Common myeloid progenitor, CD34-positive (primary cell): ENCODE measurements at regions of chr6 and their contacts with region 1.

Region 1: GRCh38 chr6:157946865-157947532 is 34.7 kb upstream of the SYNJ2 start:
- DNase-seq: peak; percentile 52 to 78 (median 77)
- H3K4me3 ChIP-seq: no peak overlapping the region
- H3K27ac ChIP-seq: no peak overlapping the region
- H3K4me1 ChIP-seq: peaks cover 0 to 7% (median 0%) of the 10 kb centered on the region in 4 experiments
- H3K27me3 ChIP-seq: no peaks in the 10 kb centered on the region

Region 2: DNA sequence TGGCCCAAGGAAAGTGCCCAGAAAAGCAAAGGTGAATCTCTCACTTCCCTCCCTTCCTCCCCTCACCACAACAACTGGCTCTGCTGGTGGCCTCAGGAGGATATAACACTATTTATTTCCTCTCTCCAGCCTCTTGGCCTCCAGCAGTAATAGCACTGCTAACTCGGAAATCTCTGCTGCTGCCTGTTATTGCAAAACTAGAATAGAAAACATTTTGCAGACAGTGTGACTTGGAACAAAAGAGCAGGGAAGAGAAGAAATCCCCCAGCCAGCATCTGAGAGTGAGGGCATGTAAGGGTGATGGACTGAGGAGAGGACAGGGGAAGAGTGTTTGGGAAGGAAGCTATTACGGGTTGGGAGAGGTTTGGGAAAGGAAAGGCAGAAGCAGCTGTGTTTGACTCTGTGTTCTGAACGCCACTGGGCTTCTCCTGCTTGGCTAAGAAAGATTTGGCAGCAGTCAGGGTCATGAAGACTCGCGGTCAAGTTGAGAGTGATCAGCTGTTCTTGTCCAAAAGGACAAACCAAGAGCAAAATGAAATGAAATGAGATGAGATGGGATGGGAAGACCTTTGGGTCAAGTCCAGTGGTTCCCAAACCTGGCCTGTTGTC is 204.9 kb before region 1 on chr6:
- CTCF ChIA-PET with region 1: no interaction called
- POLR2A ChIA-PET with region 1: no interaction called
- DNase-seq: no peak
- H3K4me3 ChIP-seq: no peak overlapping the region
- H3K27ac ChIP-seq: no peak overlapping the region
- H3K4me1 ChIP-seq: no peaks in the 10 kb centered on the region
- H3K27me3 ChIP-seq: no peaks in the 10 kb centered on the region

Region 3: DNA sequence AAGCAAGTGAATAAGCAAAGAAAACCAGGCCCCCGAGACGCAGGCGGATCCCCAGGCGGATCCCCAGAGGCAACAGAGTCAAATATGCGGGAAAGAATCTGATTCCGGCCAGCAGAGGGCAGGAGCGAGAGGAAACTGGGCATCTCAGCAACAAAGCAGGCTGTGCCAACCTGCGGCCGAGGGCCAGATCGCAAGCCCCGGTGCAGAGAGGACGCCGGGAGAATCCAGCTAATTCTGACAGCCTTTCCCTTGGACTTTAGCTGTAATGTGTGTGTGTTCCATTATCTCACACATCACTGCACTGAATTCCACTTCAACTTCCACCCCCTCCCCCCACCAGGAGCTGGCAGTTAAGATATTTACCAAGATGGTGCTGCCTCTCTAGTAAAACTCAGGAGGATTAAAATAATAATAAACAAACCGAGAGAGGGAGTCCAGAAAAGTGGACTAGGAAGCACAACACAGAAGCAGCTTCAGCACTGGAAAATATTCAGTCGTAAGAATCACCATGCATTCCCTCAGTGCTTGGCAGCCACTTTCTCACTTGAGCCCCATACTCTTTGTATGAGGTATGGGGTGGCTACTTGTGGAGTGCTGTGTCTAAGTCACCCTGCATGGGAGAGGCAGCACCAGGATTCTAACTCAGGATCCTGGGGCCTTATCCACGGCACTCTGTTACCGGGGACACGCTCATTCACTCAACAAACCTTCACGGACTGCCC is 190.1 kb before region 1 on chr6:
- CTCF ChIA-PET with region 1: interaction called, 32 read pairs
- POLR2A ChIA-PET with region 1: no interaction called
- DNase-seq: peak; percentile 78 to 87 (median 81)
- H3K4me3 ChIP-seq: no peak overlapping the region
- H3K27ac ChIP-seq: no peak overlapping the region
- H3K4me1 ChIP-seq: peaks cover 2 to 11% (median 10%) of the 10 kb centered on the region in 4 experiments
- H3K27me3 ChIP-seq: peaks cover 0 to 2% (median 0%) of the 10 kb centered on the region in 5 experiments

Region 4: GRCh38 chr6:157764178-157765033 is 182.6 kb before region 1 on chr6:
- CTCF ChIA-PET with region 1: interaction called, 32 read pairs
- POLR2A ChIA-PET with region 1: no interaction called
- DNase-seq: peak; percentile 92 to 97 (median 96)
- H3K4me3 ChIP-seq: peak overlapping the region in 4 of 7 experiments; percentile 20 to 49 (median 30)
- H3K27ac ChIP-seq: no peak overlapping the region
- H3K4me1 ChIP-seq: peaks cover 21 to 58% (median 53%) of the 10 kb centered on the region in 4 experiments
- H3K27me3 ChIP-seq: no peaks in the 10 kb centered on the region

Region 5: DNA sequence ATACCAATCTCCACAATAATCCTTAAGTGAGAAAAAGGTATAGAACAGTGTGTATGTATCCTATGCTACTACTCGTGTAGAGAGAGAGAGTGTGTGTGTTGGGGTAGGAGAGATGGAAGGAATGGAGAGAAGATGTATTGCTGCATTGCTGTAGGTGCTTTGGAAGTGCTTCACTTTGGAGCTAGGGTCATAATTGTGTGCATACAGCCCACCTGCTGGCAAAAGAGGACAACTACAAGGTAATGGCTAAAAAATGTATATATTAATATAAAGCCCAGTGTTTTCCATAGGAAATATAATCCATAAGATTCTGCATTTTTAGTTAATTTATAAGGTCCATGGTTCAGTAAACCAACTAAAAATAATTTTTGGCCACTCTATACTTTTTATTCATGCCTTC is 184.9 kb after region 1 on chr6:
- CTCF ChIA-PET with region 1: interaction called, 13 read pairs
- POLR2A ChIA-PET with region 1: no interaction called
- DNase-seq: peak; percentile 23 to 53 (median 53)
- H3K4me3 ChIP-seq: no peak overlapping the region
- H3K27ac ChIP-seq: no peak overlapping the region
- H3K4me1 ChIP-seq: peaks cover 0 to 4% (median 0%) of the 10 kb centered on the region in 4 experiments
- H3K27me3 ChIP-seq: no peaks in the 10 kb centered on the region

Region 6: DNA sequence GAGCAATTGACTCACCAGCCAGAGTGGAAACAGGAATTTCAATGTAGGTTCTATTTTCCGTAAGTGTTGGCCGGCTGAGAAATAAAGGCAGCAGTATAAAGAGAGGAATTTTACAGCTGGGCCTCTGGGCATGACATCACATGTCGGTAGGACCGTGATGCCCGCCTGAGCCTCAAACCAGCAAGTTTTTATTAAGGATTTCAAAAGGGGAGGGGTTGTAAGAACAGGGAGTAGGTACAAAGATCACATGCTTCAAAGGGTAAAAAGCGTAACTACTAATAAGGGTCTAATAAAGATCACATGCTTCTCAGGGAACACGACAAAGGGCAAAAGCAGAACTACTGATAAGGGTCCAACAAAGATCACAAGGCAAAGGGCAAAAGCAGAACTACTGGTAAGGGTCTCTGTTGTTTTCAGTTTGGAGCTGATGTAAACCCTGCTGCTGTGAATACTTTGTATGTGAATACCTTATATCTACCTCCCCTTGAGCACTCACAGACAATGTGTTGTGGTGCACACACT is 356.3 kb after region 1 on chr6:
- CTCF ChIA-PET with region 1: no interaction called
- POLR2A ChIA-PET with region 1: no interaction called
- DNase-seq: no peak
- H3K4me3 ChIP-seq: no peak overlapping the region
- H3K27ac ChIP-seq: no peak overlapping the region
- H3K4me1 ChIP-seq: no peaks in the 10 kb centered on the region
- H3K27me3 ChIP-seq: no peaks in the 10 kb centered on the region